ENCODE measurements at regions of chr7 and their contacts with region 1.

Region 1: GRCh38 chr7:139620676-139621344 is 97.3 kb downstream of the CLEC2L start:
- DNase-seq: peak; percentile 55 to 65
- H3K4me3 ChIP-seq: no peak overlapping the region
- H3K27ac ChIP-seq: no peak overlapping the region
- H3K4me1 ChIP-seq: no peaks in the 10 kb centered on the region
- H3K27me3 ChIP-seq: no peaks in the 10 kb centered on the region
- CTCF ChIP-seq: peak; percentile 89

Region 2: DNA sequence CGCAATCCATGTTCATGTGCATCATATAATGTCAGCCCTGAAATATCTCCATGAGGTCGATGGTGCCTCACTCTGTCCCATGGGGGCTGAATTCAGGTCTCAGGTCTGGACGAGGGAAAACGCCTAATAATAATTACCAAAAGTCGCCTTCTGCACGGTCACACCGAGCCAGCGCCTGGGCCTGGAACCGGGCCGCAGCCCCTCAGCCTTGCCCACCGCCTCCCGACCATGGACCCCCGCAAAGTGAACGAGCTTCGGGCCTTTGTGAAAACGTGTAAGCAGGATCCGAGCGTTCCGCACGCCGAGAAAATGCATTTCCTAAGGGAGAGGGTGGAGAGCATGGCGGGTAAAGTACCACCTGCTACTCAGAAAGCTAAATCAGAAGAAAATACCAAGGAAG is 118.6 kb before region 1 on chr7:
- CTCF ChIA-PET with region 1: interaction called, 3 read pairs
- POLR2A ChIA-PET with region 1: no interaction called
- intact Hi-C with region 1: loop called (anchors 5 kb)
- DNase-seq: no peak
- H3K4me3 ChIP-seq: no peak overlapping the region
- H3K27ac ChIP-seq: no peak overlapping the region
- H3K4me1 ChIP-seq: no peaks in the 10 kb centered on the region
- H3K27me3 ChIP-seq: no peaks in the 10 kb centered on the region
- CTCF ChIP-seq: no peak

Region 3: DNA sequence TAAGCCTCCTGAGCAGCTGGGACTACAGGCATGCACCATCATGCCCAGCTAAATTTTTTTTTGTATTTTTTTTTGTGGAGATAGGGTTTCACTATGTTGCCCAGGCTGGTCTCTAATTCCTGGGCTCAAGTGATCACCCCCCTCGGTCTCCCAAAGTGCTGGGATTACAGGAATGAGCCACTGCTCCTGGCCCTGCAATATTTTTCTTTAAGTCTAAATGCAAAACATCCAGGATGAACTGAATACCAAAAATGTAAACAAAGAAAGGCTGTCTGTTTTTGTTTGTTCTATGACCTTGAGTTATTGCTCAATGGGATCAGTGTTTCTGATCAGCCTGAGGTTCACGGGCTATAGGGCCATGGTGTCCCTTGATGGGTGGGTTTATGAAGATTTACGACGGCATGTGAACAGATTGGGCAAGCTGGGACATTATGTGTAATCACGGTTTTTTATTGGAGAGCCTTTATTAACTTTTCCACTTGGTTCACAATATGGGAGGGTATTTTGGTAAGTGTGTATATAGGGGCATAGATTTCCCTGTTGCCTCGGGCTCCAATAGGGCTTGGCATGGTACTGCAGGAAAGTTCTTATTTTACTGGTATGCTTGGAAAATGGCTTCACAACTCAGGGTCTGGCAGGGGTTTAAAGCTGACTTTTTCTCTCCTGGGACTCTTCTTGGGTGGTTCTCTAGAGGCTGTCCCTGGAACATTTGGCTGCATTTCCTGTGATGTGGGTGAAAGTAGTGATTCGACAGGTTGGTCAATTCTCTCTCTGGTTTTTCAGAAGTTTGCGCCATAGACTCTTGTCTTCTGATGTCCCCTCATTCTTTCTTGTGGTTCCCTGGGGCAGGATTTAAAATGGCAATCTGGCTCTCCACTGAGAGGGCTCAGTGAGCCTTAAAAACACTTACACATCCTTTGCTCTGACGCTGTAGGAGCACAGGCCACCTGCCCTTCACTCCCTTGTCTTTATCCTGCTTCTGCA is 1352.4 kb after region 1 on chr7:
- CTCF ChIA-PET with region 1: interaction called, 10 read pairs
- POLR2A ChIA-PET with region 1: no interaction called
- intact Hi-C with region 1: no loop called
- DNase-seq: peak in 1 of 2 experiments; percentile 59
- H3K4me3 ChIP-seq: no peak overlapping the region
- H3K27ac ChIP-seq: peak overlapping the region; percentile 22; the same call in 1 of the 2 replicates
- H3K4me1 ChIP-seq: peaks cover 48% of the 10 kb centered on the region
- H3K27me3 ChIP-seq: no peaks in the 10 kb centered on the region
- CTCF ChIP-seq: no peak

Measured in PC-9 (cell line).